ENCODE measurements at regions of chr3 and their contacts with region 1.

Region 1: DNA sequence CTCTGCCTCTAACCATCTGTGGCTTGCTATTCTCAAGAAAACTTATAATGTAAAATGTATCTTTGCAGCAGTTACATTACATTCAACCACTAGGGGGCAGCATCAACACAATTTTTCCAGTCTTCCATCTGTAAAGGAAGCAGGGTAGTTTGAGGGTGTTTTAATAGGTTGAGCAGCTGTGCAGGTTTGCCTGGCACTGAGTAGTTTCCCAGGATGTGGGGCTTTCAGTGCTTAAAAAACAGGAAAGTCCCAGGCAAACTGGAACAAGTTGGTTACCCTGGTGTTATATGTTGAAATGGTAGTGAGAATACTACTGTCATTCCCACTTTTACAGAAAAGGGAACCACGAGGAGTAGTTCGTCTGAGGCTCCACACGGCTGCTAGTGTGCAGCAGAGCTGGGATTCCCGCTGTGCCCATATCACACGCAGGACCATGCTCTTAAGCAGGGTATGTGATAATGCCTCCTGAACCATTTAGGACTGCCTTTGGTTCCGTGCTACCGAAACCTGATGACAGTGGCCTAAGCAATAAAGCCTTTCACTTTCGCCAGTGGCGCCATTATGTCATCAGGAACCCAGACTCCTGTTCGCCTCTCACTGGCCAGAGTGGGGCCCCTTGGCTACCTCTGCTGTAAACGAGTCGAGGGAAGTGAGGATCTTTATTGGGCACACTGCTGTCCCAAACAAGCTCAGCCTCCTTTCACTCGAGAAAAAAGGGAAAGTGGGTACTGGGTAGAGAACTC is 64.7 kb upstream of the ZBTB38 start:
- DNase-seq: peak; percentile 69 to 79
- ATAC-seq: peak; percentile 65 to 83; a peak in 5 of 6 replicates
- H3K4me3 ChIP-seq: no peak overlapping the region
- H3K27ac ChIP-seq: peak overlapping the region; percentile 21 to 71; a peak in 5 of 6 replicates
- H3K4me1 ChIP-seq: peaks cover 34% of the 10 kb centered on the region
- CTCF ChIP-seq: peak; percentile 87
- EP300 ChIP-seq: no peak
- POLR2A ChIP-seq: no peak
- RAD21 ChIP-seq: peak; percentile 83 to 87

Region 2: GRCh38 chr3:141231101-141231935 is 72.3 kb before region 1 on chr3 and contains the start of gene PXYLP1:
- CTCF ChIA-PET with region 1: interaction called, 16 read pairs
- POLR2A ChIA-PET with region 1: interaction called, 3 read pairs
- DNase-seq: peak; percentile 75 to 84
- ATAC-seq: peak; percentile 94 to 96
- H3K4me3 ChIP-seq: peak within 1 kb of the TSS; percentile 90
- H3K27ac ChIP-seq: peak within 1 kb of the TSS; percentile 89 to 90
- H3K4me1 ChIP-seq: peaks cover 21% of the 10 kb centered on the region; the same call in 2 of the 3 replicates
- CTCF ChIP-seq: peak; percentile 95
- EP300 ChIP-seq: no peak
- POLR2A ChIP-seq: peak; percentile 89
- RAD21 ChIP-seq: peak in 1 of 2 experiments; percentile 64; a peak in 4 of 5 replicates
- polyA plus RNA-seq, gene PXYLP1: 11.7 and 12.1 TPM in 2 replicates

Region 3: GRCh38 chr3:141291559-141292355 is 11.9 kb before region 1 on chr3:
- CTCF ChIA-PET with region 1: interaction called, 68 read pairs
- POLR2A ChIA-PET with region 1: no interaction called
- DNase-seq: no peak
- ATAC-seq: no peak
- H3K4me3 ChIP-seq: no peak overlapping the region
- H3K27ac ChIP-seq: no peak overlapping the region
- H3K4me1 ChIP-seq: peaks cover 9% of the 10 kb centered on the region; the same call in 1 of the 3 replicates
- CTCF ChIP-seq: no peak
- EP300 ChIP-seq: no peak
- POLR2A ChIP-seq: no peak
- RAD21 ChIP-seq: no peak

Region 4: GRCh38 chr3:141441381-141442364 is 138.0 kb after region 1 on chr3:
- CTCF ChIA-PET with region 1: interaction called, 29 read pairs
- POLR2A ChIA-PET with region 1: no interaction called
- DNase-seq: peak; percentile 66 to 73
- ATAC-seq: peak; percentile 88 to 94
- H3K4me3 ChIP-seq: no peak overlapping the region
- H3K27ac ChIP-seq: peak overlapping the region; percentile 4 to 68; a peak in 4 of 6 replicates
- H3K4me1 ChIP-seq: peaks cover 23% of the 10 kb centered on the region
- CTCF ChIP-seq: peak; percentile 61
- EP300 ChIP-seq: no peak
- POLR2A ChIP-seq: no peak
- RAD21 ChIP-seq: peak; percentile 62 to 71

Region 5: GRCh38 chr3:141561426-141562034 is 257.9 kb after region 1 on chr3:
- CTCF ChIA-PET with region 1: interaction called, 40 read pairs
- POLR2A ChIA-PET with region 1: no interaction called
- DNase-seq: peak in 1 of 2 experiments; percentile 81
- ATAC-seq: peak in 1 of 2 experiments; percentile 55; a peak in 2 of 6 replicates
- H3K4me3 ChIP-seq: no peak overlapping the region
- H3K27ac ChIP-seq: peak overlapping the region in 1 of 2 experiments; percentile 39; a peak in 1 of 6 replicates
- H3K4me1 ChIP-seq: 0 out of 3 replicates have a peak, but pooled peaks cover 3% of the 10 kb centered on the region
- CTCF ChIP-seq: peak; percentile 98
- EP300 ChIP-seq: no peak
- POLR2A ChIP-seq: no peak
- RAD21 ChIP-seq: peak; percentile 98 to 99